ENCODE measurements at regions of chr4 and their contacts with region 1.

Region 1: GRCh38 chr4:101347557-101348366 is 436 bp upstream of the PPP3CA start:
- DNase-seq: peak; percentile 99
- ATAC-seq: peak; percentile 95
- H3K4me3 Mint-ChIP-seq: peak overlapping the region; percentile 90
- H3K27ac Mint-ChIP-seq: peak overlapping the region; percentile 77
- H3K4me1 Mint-ChIP-seq: peaks cover 28% of the 10 kb centered on the region
- H3K27me3 Mint-ChIP-seq: peaks cover 22% of the 10 kb centered on the region

Region 2: DNA sequence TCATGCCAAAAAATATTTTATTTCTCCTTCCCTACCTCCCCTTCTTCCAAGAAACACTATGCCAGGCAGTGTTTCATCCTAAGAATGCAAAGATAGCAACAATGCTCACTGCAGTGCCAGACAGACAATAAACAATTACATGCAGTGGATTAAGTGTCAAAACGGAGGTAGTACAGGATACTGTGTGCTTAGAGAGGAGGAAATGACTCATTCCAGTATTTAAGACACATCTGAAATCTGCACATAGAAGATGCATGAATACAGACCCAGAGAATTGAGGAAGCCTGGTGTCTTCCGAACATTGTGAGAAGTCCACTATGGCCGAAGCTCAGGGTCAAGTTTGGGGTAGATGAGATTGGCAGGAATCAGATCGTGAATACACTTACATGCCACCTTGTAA is 326.8 kb before region 1 on chr4:
- CTCF ChIA-PET with region 1: no interaction called
- POLR2A ChIA-PET with region 1: no interaction called
- intact Hi-C with region 1: loop called in 1 of 2 experiments (anchors 2 kb)
- DNase-seq: no peak
- ATAC-seq: peak; percentile 70
- H3K4me3 Mint-ChIP-seq: no peak overlapping the region
- H3K27ac Mint-ChIP-seq: peak overlapping the region; percentile 64
- H3K4me1 Mint-ChIP-seq: peaks cover 50% of the 10 kb centered on the region
- H3K27me3 Mint-ChIP-seq: no peaks in the 10 kb centered on the region

Region 3: GRCh38 chr4:101126059-101126458 is 221.7 kb before region 1 on chr4:
- CTCF ChIA-PET with region 1: no interaction called
- POLR2A ChIA-PET with region 1: no interaction called
- intact Hi-C with region 1: no loop called
- DNase-seq: no peak
- ATAC-seq: no peak
- H3K4me3 Mint-ChIP-seq: no peak overlapping the region
- H3K27ac Mint-ChIP-seq: no peak overlapping the region
- H3K4me1 Mint-ChIP-seq: peaks cover 21% of the 10 kb centered on the region
- H3K27me3 Mint-ChIP-seq: no peaks in the 10 kb centered on the region

Region 4: DNA sequence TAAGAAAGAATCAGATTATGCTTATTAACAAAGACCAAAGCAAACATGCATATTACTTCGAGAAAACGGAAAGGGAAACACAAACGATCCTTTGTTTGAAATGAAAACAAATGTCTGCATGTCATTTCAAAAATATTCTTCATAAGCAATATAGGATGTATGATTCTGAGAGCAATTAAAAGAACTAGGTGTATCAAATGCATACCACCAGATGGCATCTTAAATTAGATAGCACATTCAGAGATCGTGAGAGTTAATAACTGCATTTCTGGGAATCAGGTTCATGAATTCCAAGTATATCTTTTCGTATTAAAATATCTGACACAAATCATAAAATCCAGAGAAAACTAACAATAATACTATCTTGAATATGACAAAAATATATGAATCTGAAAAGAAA is 159.9 kb before region 1 on chr4:
- CTCF ChIA-PET with region 1: no interaction called
- POLR2A ChIA-PET with region 1: no interaction called
- intact Hi-C with region 1: loop called in 1 of 2 experiments (anchors 2 kb)
- DNase-seq: no peak
- ATAC-seq: no peak
- H3K4me3 Mint-ChIP-seq: no peak overlapping the region
- H3K27ac Mint-ChIP-seq: no peak overlapping the region
- H3K4me1 Mint-ChIP-seq: peaks cover 8% of the 10 kb centered on the region
- H3K27me3 Mint-ChIP-seq: no peaks in the 10 kb centered on the region

Region 5: GRCh38 chr4:101328063-101328602 is 19.6 kb before region 1 on chr4:
- CTCF ChIA-PET with region 1: interaction called, 4 read pairs
- POLR2A ChIA-PET with region 1: no interaction called
- intact Hi-C with region 1: loop called (anchors 1 kb)
- DNase-seq: peak; percentile 27
- ATAC-seq: peak; percentile 90
- H3K4me3 Mint-ChIP-seq: peak overlapping the region; percentile 41
- H3K27ac Mint-ChIP-seq: peak overlapping the region; percentile 37
- H3K4me1 Mint-ChIP-seq: peaks cover 37% of the 10 kb centered on the region
- H3K27me3 Mint-ChIP-seq: peaks cover 24% of the 10 kb centered on the region

Region 6: GRCh38 chr4:101596781-101597552 is 249.2 kb after region 1 on chr4:
- CTCF ChIA-PET with region 1: no interaction called
- POLR2A ChIA-PET with region 1: no interaction called
- intact Hi-C with region 1: loop called in 1 of 2 experiments (anchors 5 kb)
- DNase-seq: peak; percentile 39
- ATAC-seq: no peak
- H3K4me3 Mint-ChIP-seq: no peak overlapping the region
- H3K27ac Mint-ChIP-seq: no peak overlapping the region
- H3K4me1 Mint-ChIP-seq: no peaks in the 10 kb centered on the region
- H3K27me3 Mint-ChIP-seq: no peaks in the 10 kb centered on the region

Region 7: GRCh38 chr4:102500696-102501446 is 1153.1 kb after region 1 on chr4 and contains the start of gene NFKB1:
- CTCF ChIA-PET with region 1: no interaction called
- POLR2A ChIA-PET with region 1: no interaction called
- intact Hi-C with region 1: loop called in 1 of 2 experiments (anchors 5 kb)
- DNase-seq: peak; percentile 88
- ATAC-seq: peak; percentile 72
- H3K4me3 Mint-ChIP-seq: peak within 1 kb of the TSS; percentile 97
- H3K27ac Mint-ChIP-seq: peak within 1 kb of the TSS; percentile 96
- H3K4me1 Mint-ChIP-seq: peaks cover 26% of the 10 kb centered on the region
- H3K27me3 Mint-ChIP-seq: no peaks in the 10 kb centered on the region
- total RNA-seq, gene NFKB1: 167 to 174 TPM

Measured in activated CD4-positive, alpha-beta T cell treated with anti-CD3 and anti-CD28 coated beads for 36 hours (primary cell).